IMR-90 (cell line): ENCODE measurements at regions of chr20 and their contacts with region 1.

Region 1: GRCh38 chr20:46872328-46873211 is 22.1 kb upstream of the EYA2 start:
- DNase-seq: peak; percentile 72
- ATAC-seq: peak; percentile 98
- H3K4me3 ChIP-seq: peak overlapping the region; percentile 55
- H3K27ac ChIP-seq: peak overlapping the region; percentile 58; the same call in 1 of the 2 replicates
- H3K4me1 ChIP-seq: no peaks in the 10 kb centered on the region
- H3K27me3 ChIP-seq: no peaks in the 10 kb centered on the region
- CTCF ChIP-seq: no peak
- POLR2A ChIP-seq: no peak
- RAD21 ChIP-seq: no peak

Region 2: DNA sequence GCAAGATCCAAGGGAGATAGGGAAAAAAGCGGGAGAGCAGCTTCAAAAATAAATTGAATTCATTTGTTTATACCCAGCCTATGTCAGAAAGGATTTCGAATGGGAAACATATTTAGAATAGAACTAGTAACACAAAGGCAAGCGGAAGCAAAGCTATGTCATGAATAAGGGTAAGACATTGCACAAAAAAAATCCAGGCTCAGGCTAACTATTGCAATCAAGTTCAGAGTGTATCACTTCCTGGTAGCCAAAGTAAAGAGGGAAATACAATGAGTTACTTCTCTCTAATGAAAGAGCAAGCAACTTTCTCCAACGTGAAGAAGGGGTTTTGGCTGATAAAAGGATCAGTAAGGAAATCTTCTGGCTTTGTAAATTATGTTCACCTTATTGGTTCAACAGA is 271.1 kb after region 1 on chr20:
- CTCF ChIA-PET with region 1: no interaction called
- POLR2A ChIA-PET with region 1: no interaction called
- dilution Hi-C with region 1: no loop called
- in situ Hi-C with region 1: no loop called
- intact Hi-C with region 1: loop called (anchors 2 kb)
- DNase-seq: no peak
- ATAC-seq: no peak
- H3K4me3 ChIP-seq: no peak overlapping the region
- H3K27ac ChIP-seq: no peak overlapping the region
- H3K4me1 ChIP-seq: peaks cover 13% of the 10 kb centered on the region
- H3K27me3 ChIP-seq: no peaks in the 10 kb centered on the region
- CTCF ChIP-seq: no peak
- POLR2A ChIP-seq: no peak
- RAD21 ChIP-seq: no peak